ENCODE measurements at regions of chr7 and their contacts with region 1.

Region 1: DNA sequence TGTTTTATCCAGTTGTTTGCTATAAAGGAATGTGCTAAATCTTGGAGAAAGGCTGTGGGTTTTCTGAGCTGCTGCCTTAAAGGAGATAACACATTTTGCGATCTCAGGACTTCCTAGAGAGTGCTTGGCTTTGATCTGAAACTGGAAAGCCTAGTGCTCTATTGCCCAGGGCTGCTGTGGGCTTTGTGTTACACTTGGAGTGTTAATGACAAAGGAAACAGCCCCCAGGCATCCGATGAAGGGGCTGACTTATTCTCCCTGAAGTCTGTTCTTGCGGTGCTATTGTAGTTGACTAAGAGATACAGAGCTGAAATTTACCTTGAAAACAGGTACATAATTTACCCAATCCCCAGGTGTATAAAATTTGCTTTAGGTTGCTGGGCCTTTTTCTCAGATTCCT is 74.5 kb downstream of the SND1 start:
- DNase-seq: no peak
- H3K4me3 ChIP-seq: no peak overlapping the region
- H3K27ac ChIP-seq: no peak overlapping the region
- H3K4me1 ChIP-seq: no peaks in the 10 kb centered on the region
- H3K27me3 ChIP-seq: no peaks in the 10 kb centered on the region
- CTCF ChIP-seq: no peak

Region 2: DNA sequence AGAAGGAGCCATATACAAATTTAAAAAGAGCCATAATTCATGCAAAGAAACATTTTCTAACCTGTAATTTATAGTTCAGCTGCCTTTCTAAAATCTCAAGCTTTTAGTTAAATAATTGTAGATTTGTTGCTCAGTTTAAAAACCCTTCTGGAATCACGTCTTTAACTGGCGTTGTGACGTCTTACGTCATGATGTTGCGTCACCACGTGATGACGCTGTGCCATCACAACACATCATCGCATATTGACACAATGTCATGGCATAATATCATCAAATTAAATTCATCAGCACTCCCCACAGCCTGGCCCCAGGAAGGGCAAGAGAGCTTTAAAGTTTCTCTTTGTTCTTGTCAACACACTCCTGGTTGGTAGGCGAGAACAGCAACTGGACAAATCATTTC is 668.6 kb before region 1 on chr7:
- intact Hi-C with region 1: no loop called
- DNase-seq: no peak
- H3K4me3 ChIP-seq: no peak overlapping the region
- H3K27ac ChIP-seq: no peak overlapping the region
- H3K4me1 ChIP-seq: no peaks in the 10 kb centered on the region
- H3K27me3 ChIP-seq: no peaks in the 10 kb centered on the region
- CTCF ChIP-seq: no peak

Region 3: DNA sequence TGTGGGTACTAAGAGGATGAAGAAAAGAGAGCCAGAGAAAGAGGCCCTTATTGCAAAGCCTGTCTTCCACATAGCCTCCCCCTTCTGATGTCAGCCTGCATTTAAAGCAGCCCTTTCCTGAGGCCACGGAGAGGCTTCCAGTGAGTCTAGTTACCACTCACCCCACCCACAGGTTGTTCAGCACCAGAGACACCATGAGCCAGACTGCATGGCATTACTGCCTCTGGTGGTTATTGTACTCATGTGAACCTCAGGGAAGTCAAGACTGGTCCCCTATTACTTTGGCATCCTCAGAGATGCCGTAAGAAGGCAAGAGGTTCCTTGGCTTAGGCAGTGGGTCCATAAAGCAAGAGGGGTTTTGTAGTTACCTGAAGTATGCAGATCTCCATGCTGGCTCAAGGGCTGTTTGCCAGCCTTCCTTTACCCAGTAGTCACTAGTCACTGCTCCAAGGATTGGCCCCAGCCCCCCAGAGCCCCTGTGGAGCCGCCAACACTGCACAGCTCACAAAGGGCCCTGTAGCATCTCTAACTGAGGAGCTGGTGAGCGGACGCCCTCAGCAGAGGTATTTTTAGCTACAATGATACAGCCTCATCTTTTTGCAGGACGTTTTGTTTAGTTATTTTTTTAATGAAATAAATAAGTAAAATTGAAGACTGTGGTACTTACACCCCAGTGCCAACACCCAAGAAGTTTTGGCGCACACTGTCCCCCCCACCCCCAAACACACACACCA is 284.1 kb after region 1 on chr7:
- intact Hi-C with region 1: loop called (anchors 10 kb)
- DNase-seq: no peak
- H3K4me3 ChIP-seq: no peak overlapping the region
- H3K27ac ChIP-seq: no peak overlapping the region
- H3K4me1 ChIP-seq: no peaks in the 10 kb centered on the region
- H3K27me3 ChIP-seq: no peaks in the 10 kb centered on the region
- CTCF ChIP-seq: no peak